ENCODE measurements at regions of chr6 and their contacts with region 1.

Region 1: DNA sequence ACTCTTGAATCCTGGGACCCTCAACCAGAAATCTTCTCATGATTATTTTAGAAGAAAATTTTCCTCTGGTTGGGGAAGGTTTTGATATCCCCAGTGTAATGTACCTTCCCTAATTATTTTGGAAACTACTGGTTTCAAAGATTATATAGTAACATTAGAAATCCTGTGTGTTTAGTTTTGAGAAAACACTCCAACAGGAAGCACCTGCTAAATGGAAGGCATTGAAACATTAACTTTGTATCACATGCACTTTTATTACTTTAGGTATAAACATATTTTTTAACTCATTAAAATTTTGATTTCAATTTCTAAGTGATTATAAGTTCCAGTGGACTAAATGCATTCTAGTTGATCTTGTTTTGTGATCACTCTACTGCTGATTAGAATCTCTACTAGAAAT is 109.3 kb downstream of the SESN1 start:
- DNase-seq: peak in 2 of 3 donors; percentile 52 to 65
- H3K4me3 ChIP-seq: no peak overlapping the region
- H3K27ac ChIP-seq: peak overlapping the region in 1 of 2 experiments; percentile 37
- H3K4me1 ChIP-seq: peaks cover 0 to 15% (median 4%) of the 10 kb centered on the region in 4 experiments
- H3K27me3 ChIP-seq: no peaks in the 10 kb centered on the region

Region 2: GRCh38 chr6:108966855-108967755 is 18.2 kb before region 1 on chr6:
- CTCF ChIA-PET with region 1: interaction called, 10 read pairs
- POLR2A ChIA-PET with region 1: no interaction called
- DNase-seq: peak; percentile 84 to 97 (median 95)
- H3K4me3 ChIP-seq: peak overlapping the region in 4 of 7 experiments; percentile 17 to 57 (median 46)
- H3K27ac ChIP-seq: peak overlapping the region; percentile 75 to 85
- H3K4me1 ChIP-seq: peaks cover 0 to 47% (median 34%) of the 10 kb centered on the region in 4 experiments
- H3K27me3 ChIP-seq: no peaks in the 10 kb centered on the region

Region 3: GRCh38 chr6:109036574-109037294 is 51.4 kb after region 1 on chr6:
- CTCF ChIA-PET with region 1: no interaction called
- POLR2A ChIA-PET with region 1: no interaction called
- DNase-seq: no peak
- H3K4me3 ChIP-seq: no peak overlapping the region
- H3K27ac ChIP-seq: no peak overlapping the region
- H3K4me1 ChIP-seq: peaks cover 0 to 6% (median 2%) of the 10 kb centered on the region in 4 experiments
- H3K27me3 ChIP-seq: no peaks in the 10 kb centered on the region